ENCODE measurements at regions of chr3 and their contacts with region 1.

Region 1: GRCh38 chr3:172666873-172667694 is 43.8 kb downstream of the NCEH1 start:
- DNase-seq: no peak
- H3K4me3 ChIP-seq: no peak overlapping the region
- CTCF ChIP-seq: peak; percentile 71

Region 2: DNA sequence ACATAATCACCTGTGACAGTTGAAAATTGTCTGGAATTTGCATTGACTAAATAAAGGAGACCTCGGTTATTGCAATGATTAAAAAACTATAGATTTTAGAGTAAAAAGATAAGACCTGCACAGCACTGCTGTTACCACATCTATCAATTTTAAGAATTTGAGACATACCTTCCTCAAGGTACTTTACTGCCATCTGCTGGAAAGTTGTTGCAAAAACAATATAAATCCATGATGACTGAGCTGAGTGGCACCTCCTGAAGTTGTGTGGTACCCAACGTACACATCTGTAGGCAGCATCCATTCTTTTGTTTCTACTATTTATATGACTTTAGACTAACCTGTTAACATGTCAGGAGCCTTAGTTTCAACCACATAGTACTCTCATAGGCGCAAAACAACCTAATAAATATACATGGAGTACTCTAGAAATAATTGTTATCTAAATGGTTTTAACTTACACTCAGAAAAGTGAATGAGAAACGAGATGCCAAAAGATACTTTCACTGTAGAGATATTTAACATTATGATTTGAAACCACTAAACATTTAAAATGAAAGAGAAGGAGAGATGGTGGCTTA is 325.5 kb before region 1 on chr3:
- CTCF ChIA-PET with region 1: interaction called, 13 read pairs
- POLR2A ChIA-PET with region 1: no interaction called
- DNase-seq: no peak
- H3K4me3 ChIP-seq: no peak overlapping the region
- CTCF ChIP-seq: peak; percentile 38

Region 3: DNA sequence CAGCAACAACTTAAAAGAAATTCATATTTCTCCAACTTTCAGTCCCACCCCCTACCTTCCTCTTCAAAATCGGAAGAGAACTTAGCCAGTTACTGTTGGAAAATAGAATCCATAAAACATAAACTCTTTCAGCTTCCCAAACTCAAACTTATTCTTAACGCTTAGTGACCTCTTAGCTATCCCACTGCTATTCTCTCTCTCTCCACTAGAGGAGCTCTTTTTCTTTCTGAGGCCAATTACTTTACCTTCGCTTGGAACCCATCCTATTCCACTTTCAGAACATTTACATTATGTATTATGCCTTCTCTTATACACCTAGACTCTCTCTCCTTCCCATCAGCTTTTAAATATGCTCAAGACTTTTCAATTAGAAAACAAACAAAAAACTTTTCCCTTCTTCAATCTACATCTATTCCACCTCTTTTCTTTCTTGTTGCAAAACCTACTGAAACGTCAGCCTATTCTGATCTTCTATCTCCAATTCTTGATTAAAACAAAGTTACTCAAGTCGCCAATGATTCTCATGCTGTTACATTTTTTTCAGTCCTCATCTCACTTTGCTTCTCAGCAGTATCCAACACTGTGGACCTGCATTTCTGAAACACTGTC is 205.4 kb before region 1 on chr3:
- CTCF ChIA-PET with region 1: interaction called, 12 read pairs
- POLR2A ChIA-PET with region 1: no interaction called
- DNase-seq: no peak
- H3K4me3 ChIP-seq: no peak overlapping the region
- CTCF ChIP-seq: peak; percentile 59

Region 4: GRCh38 chr3:172546628-172547214 is 120.4 kb before region 1 on chr3:
- CTCF ChIA-PET with region 1: interaction called, 14 read pairs
- POLR2A ChIA-PET with region 1: no interaction called
- DNase-seq: no peak
- H3K4me3 ChIP-seq: no peak overlapping the region
- CTCF ChIP-seq: no peak

Region 5: GRCh38 chr3:172607305-172608121 is 59.6 kb before region 1 on chr3:
- CTCF ChIA-PET with region 1: interaction called, 24 read pairs
- POLR2A ChIA-PET with region 1: no interaction called
- DNase-seq: peak; percentile 52
- H3K4me3 ChIP-seq: no peak overlapping the region
- CTCF ChIP-seq: no peak

Region 6: DNA sequence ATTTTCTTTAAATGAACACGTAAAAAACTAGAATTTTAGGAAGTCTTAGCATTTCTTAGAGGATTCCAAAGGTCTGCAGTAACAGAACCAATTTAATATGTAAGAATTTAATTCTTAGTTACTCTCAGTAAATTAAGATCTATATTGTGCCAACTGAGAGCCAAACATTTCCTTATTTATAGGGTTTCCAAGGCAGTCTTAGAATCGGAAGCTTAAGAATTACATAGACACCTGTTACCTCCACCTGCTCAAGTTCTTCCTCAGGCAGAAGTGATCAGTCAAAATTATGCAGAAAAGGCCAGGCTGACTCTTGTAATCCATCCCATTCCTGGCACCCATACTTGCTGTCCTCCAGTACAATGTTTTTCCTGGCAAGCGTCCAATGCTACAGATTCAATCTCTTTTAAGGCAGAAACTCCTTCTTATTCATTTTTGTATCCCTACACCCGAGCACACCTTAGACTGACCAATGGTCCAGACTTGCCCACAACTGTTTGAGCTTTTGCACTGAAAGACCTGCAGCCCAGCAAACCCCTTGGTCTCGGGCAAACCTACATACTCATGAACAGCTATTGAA is 20.6 kb before region 1 on chr3:
- CTCF ChIA-PET with region 1: interaction called, 27 read pairs
- POLR2A ChIA-PET with region 1: no interaction called
- DNase-seq: no peak
- H3K4me3 ChIP-seq: no peak overlapping the region
- CTCF ChIP-seq: no peak